ENCODE measurements at regions of chr11 and their contacts with region 1.

Region 1: DNA sequence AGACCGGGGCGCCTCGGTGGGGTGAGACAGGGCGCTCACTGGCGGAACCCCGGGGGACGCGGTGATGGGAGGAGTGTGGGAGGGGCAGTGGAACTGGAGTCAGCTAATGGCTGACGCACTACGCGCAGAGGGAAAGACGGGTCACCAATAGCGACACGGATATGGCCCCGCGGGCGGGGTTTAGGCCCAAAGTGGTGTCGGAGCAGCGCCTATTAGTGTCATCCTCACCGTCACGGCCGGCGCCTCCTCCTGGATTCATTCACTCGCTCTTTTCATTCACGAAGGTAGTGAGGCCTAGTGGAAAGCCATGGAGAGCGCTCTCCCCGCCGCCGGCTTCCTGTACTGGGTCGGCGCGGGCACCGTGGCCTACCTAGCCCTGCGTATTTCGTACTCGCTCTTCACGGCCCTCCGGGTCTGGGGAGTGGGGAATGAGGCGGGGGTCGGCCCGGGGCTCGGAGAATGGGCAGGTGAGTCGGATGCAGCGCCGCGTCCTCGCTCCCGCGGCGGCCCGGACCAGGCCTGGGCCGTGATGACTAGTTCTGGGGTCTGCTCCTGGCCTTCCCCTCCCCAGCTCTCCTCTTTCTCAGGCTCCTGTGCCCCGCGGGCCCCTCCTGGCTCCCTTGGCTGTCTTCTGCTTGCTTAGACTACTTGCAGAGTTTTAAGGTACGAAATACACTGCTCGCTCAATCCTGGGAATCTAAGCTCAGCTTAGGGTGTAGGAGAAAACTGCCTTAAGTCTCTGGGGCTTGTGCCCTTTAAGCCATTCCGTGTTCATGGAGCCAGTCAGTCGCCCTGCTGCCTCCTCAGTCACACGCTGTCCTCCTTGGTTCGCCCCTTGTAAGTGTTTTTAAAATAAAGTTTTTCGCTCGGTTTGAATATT is at the start of gene HSD17B12:
- DNase-seq: peak; percentile 97 to 99
- ATAC-seq: peak; percentile 95 to 100 (median 96)
- H3K4me3 ChIP-seq: peak within 1 kb of the TSS; percentile 86
- H3K4me3 Mint-ChIP-seq: peak within 1 kb of the TSS; percentile 88
- H3K27ac ChIP-seq: peak within 1 kb of the TSS; percentile 93
- H3K27ac Mint-ChIP-seq: peak within 1 kb of the TSS; percentile 83 to 98
- H3K4me1 ChIP-seq: peaks cover 17% of the 10 kb centered on the region
- H3K4me1 Mint-ChIP-seq: peaks cover 22 to 29% of the 10 kb centered on the region in 2 donors
- H3K27me3 ChIP-seq: no peaks in the 10 kb centered on the region
- H3K27me3 Mint-ChIP-seq: peaks cover 0 to 5% of the 10 kb centered on the region in 2 donors
- CTCF ChIP-seq: no peak
- total RNA-seq, gene HSD17B12: 21.0 to 26.3 (median 26.1) TPM

Region 2: GRCh38 chr11:43358801-43359421 is 321.9 kb before region 1 on chr11 and contains the start of gene TTC17:
- intact Hi-C with region 1: loop called (anchors 1 kb)
- DNase-seq: peak; percentile 87 to 94
- ATAC-seq: peak; percentile 95 to 98 (median 95)
- H3K4me3 ChIP-seq: peak within 1 kb of the TSS; percentile 87
- H3K4me3 Mint-ChIP-seq: peak within 1 kb of the TSS; percentile 99
- H3K27ac ChIP-seq: peak within 1 kb of the TSS; percentile 94
- H3K27ac Mint-ChIP-seq: peak within 1 kb of the TSS; percentile 96
- H3K4me1 ChIP-seq: peaks cover 14% of the 10 kb centered on the region
- H3K4me1 Mint-ChIP-seq: peaks cover 44% of the 10 kb centered on the region in 2 donors
- H3K27me3 ChIP-seq: no peaks in the 10 kb centered on the region
- H3K27me3 Mint-ChIP-seq: no peaks in the 10 kb centered on the region
- CTCF ChIP-seq: no peak
- total RNA-seq, gene TTC17: 100 to 129 (median 101) TPM

Region 3: GRCh38 chr11:43643898-43644620 is 36.7 kb before region 1 on chr11:
- intact Hi-C with region 1: loop called (anchors 1 kb)
- DNase-seq: peak; percentile 85 to 90
- ATAC-seq: peak; percentile 99
- H3K4me3 ChIP-seq: peak overlapping the region; percentile 89
- H3K4me3 Mint-ChIP-seq: peak overlapping the region; percentile 79
- H3K27ac ChIP-seq: peak overlapping the region; percentile 61
- H3K27ac Mint-ChIP-seq: peak overlapping the region; percentile 69 to 90
- H3K4me1 ChIP-seq: peaks cover 8% of the 10 kb centered on the region
- H3K4me1 Mint-ChIP-seq: peaks cover 14 to 15% of the 10 kb centered on the region in 2 donors
- H3K27me3 ChIP-seq: peaks cover 4% of the 10 kb centered on the region
- H3K27me3 Mint-ChIP-seq: peaks cover 12 to 14% of the 10 kb centered on the region in 2 donors
- CTCF ChIP-seq: no peak

Region 4: DNA sequence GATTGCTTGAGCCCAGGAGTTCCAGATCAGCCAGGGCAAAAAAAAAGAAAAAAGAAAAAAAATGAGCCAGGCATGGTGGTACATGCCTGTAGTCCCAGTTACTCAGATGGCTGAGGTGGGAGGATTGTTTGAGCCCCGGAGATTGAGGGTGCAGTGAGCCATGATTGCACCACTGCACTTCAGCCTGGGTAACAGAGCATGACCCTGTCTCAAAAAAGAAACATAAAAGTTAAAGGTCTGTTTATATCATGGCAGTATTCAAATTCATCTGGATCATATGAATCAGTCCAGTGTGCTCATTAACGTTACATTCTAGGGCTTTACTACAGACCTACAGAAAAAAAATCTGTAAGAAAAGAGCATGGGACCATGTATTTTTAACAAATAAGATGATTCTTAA is 13.7 kb after region 1 on chr11:
- intact Hi-C with region 1: no loop called
- DNase-seq: no peak
- ATAC-seq: no peak
- H3K4me3 ChIP-seq: no peak overlapping the region
- H3K4me3 Mint-ChIP-seq: no peak overlapping the region
- H3K27ac ChIP-seq: no peak overlapping the region
- H3K27ac Mint-ChIP-seq: no peak overlapping the region
- H3K4me1 ChIP-seq: no peaks in the 10 kb centered on the region
- H3K4me1 Mint-ChIP-seq: peaks cover 7 to 36% of the 10 kb centered on the region in 2 donors
- H3K27me3 ChIP-seq: no peaks in the 10 kb centered on the region
- H3K27me3 Mint-ChIP-seq: no peaks in the 10 kb centered on the region
- CTCF ChIP-seq: no peak

Region 5: DNA sequence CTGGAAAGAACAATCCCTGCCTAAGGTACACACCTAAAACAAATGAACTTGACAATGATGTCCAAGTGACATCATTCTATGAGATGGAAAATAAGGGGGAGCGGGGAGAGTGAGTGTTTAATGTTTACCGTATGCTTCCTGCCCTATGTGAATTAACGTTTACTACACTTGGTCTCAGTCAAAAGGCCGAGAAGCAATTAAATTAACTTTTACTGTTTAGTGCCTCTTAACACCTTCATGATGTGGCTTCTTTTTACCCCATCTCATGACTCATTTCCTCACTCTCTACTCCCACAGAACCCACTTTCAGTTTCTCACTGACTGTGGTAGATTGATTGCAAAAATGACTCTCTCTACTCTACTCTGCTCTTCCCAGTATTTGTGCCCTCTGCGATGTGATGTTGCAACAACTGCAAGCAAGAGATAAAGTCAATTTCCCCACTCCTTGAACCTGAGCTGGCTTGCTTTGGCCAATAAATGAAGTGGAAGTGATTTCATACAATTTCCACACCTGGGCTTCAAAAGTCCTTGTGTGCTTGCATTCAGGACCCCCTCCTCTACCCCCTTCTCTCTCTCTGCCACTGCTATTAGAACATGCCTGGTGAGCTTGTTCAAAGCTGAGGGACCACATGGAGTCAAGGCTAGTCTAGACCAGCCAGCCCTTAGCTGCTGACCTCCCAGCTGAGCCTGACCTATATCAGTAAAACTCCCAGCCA is 188.2 kb after region 1 on chr11:
- intact Hi-C with region 1: loop called (anchors 2 kb)
- DNase-seq: peak; percentile 25 to 77
- ATAC-seq: peak; percentile 89 to 98 (median 96)
- H3K4me3 ChIP-seq: no peak overlapping the region
- H3K4me3 Mint-ChIP-seq: peak overlapping the region; percentile 43
- H3K27ac ChIP-seq: peak overlapping the region; percentile 84
- H3K27ac Mint-ChIP-seq: peak overlapping the region; percentile 73 to 86
- H3K4me1 ChIP-seq: peaks cover 16% of the 10 kb centered on the region
- H3K4me1 Mint-ChIP-seq: peaks cover 28 to 29% of the 10 kb centered on the region in 2 donors
- H3K27me3 ChIP-seq: no peaks in the 10 kb centered on the region
- H3K27me3 Mint-ChIP-seq: peaks cover 9 to 14% of the 10 kb centered on the region in 2 donors
- CTCF ChIP-seq: no peak

Region 6: DNA sequence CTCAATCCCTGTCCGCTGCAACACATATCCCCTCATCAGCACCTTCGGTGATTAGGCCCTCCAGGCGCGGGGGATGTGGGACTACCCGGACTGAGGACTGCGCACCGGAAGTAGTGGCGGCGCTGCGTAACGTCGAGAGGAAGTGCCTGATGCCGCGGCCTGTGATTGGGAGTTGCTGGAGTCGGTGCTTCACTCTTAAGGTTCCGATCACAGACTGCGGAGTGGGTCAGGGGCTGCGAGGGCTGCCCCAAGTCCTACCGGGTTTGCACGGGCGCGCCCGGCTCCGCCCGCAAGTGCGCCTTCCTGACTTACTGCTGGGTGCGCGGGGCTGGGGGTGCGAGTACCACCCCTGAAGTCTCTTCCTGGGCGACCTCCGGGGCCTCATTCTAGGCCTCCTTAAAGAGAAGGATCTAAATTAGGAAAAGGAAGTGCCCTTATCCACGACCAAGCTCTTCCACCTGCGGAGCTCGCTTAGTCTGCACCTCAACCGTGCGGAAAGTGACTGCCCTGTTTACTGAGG is 199.9 kb after region 1 on chr11 and contains the start of gene ALKBH3:
- intact Hi-C with region 1: loop called (anchors 5 kb)
- DNase-seq: peak; percentile 86 to 96
- ATAC-seq: peak; percentile 100
- H3K4me3 ChIP-seq: peak within 1 kb of the TSS; percentile 78
- H3K4me3 Mint-ChIP-seq: peak within 1 kb of the TSS; percentile 98
- H3K27ac ChIP-seq: peak within 1 kb of the TSS; percentile 68
- H3K27ac Mint-ChIP-seq: peak within 1 kb of the TSS; percentile 93 to 97
- H3K4me1 ChIP-seq: peaks cover 13% of the 10 kb centered on the region
- H3K4me1 Mint-ChIP-seq: peaks cover 20 to 26% of the 10 kb centered on the region in 2 donors
- H3K27me3 ChIP-seq: peaks cover 4% of the 10 kb centered on the region
- H3K27me3 Mint-ChIP-seq: peaks cover 9 to 20% of the 10 kb centered on the region in 2 donors
- CTCF ChIP-seq: no peak
- total RNA-seq, gene ALKBH3: 24.3 to 30.8 (median 29.6) TPM